Left cardiac atrium (tissue), 4 donors: ENCODE measurements at regions of chr7 and their contacts with region 1.

Region 1: GRCh38 chr7:90262438-90262837 is 17.5 kb downstream of the CFAP69 start:
- DNase-seq: no peak
- ATAC-seq: no peak

Region 2: DNA sequence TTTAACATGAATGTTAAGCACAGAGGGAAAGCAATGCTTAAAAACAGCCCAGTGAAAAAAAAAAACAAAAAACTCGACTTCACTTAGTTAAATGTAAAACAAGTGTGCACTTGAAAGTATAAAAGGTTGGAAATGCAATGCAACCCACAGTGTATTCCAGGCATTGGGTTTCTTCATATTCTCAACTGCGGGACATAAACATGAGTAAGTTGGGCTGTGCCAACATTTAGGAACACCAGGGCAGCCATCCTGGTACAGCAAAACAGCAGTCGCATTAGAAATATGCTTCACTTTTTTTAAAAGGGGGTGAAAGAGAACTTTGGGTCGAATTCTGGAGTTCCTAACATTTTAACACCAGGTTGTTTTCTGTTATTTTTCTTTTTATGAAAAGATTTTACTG is 107.2 kb before region 1 on chr7:
- intact Hi-C with region 1: loop called in 1 of 2 experiments (anchors 5 kb)
- DNase-seq: no peak
- ATAC-seq: no peak